ENCODE measurements at regions of chr5 and their contacts with region 1.

Region 1: DNA sequence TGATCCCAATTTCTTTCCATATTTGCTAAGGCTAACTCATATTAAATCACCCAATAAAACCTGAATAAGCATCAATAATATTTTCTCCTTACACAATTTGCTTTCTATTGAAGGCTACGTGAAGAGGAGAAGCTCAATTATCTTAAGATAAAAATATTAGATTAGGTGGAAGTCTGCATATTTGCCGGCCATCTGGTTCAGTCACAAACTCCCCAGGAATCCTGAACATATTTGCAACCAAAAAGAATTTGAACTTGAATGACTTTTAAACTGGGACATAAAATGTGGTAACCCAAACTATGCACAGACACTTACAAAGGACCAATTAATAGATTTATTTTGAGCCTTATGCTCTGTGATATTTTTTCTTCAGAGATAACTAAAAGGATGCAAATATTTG is 92.3 kb downstream of the HAPLN1 start:
- DNase-seq: no peak

Region 2: DNA sequence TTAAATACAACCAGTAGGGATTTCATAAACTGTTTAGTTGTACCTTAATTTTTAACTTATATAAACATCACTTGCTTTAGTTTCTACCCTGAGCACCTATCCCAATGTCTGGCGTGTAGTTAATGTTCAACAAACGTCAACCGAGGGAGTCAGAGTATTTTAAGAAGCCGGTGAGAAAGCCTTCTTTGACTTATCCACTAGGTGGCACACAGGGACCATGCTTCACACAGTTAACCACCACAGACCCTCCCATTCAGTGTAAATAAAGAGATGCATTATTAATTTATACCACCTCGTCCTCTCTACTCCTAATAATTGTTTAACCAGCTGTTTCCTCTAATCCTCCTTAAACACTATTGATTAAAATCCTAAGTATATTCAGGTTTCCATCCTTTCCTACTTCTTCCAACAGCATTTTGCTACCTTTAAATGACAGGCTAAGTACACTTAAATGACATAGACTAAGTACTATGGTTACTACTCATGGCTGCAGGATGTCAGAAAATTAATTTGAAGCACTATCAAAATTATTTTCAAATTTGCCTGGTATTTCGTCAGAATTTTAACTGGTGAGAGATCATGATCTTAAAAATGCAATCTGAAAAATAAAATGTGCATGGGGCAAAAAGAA is 90.0 kb after region 1 on chr5:
- intact Hi-C with region 1: no loop called
- DNase-seq: no peak

Region 3: DNA sequence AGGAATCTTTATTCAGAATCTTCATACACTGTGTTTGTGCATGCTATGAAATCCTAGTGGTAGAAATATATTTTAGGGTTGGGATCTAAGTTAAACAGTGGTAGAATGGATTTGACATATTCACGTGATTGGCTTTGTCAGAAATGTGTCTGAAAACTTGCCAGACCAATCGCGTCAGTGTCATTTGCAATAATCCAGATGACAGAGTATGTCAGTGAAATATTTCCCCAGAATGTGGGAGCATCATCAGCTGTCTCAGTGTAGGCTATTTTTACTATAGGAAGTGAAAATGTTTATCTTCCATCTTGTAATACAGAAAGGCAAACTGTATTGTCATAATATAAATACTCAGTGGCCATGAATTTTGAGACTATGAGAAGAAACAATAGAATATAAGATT is 976.9 kb after region 1 on chr5:
- intact Hi-C with region 1: loop called in 1 of 2 experiments (anchors 5 kb)
- DNase-seq: no peak

Measured in posterior vena cava (tissue), 2 donors.